HEK293 (cell line): ENCODE measurements at regions of chr9 and their contacts with region 1.

Region 1: GRCh38 chr9:130461218-130461630 is 16.5 kb downstream of the ASS1 start:
- H3K4me3 ChIP-seq: no peak overlapping the region
- H3K27ac ChIP-seq: no peak overlapping the region
- H3K4me1 ChIP-seq: no peaks in the 10 kb centered on the region
- CTCF ChIP-seq: peak; percentile 92

Region 2: DNA sequence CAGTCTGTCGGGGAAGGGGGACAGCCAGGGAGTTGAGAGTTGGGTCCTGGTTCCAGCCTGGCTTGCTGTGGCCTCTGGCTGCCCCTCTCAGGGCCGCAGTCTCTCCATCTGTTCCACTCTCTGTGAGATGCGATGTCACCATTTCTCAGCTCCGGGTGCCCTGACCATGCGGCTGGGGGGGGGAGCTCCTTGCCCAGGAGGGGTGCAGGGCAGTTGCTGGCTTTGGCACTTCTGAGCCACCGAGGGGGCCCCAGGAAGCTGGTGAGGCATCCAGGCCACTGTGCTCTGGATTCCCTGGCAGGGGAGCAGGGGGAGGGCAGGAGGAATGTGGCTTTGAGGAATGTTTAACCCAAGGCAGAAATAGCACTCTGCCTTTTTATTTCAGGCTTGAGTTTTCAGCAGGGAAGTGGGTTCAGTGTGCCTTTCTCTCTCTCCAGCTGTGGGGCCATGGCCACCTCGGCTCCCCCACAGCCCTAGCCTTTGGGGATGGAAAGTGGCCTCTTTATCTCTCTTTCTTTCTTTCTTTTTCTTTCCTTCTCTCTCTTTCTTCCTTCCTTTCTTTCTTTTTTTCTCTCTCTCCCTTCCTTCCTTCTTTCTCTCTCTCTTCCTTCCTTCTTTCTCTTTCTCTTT is 278.0 kb before region 1 on chr9:
- CTCF ChIA-PET with region 1: no interaction called
- POLR2A ChIA-PET with region 1: no interaction called
- H3K4me3 ChIP-seq: no peak overlapping the region
- H3K27ac ChIP-seq: no peak overlapping the region
- H3K4me1 ChIP-seq: peaks cover 2% of the 10 kb centered on the region; the same call in 1 of the 2 replicates
- CTCF ChIP-seq: no peak

Region 3: DNA sequence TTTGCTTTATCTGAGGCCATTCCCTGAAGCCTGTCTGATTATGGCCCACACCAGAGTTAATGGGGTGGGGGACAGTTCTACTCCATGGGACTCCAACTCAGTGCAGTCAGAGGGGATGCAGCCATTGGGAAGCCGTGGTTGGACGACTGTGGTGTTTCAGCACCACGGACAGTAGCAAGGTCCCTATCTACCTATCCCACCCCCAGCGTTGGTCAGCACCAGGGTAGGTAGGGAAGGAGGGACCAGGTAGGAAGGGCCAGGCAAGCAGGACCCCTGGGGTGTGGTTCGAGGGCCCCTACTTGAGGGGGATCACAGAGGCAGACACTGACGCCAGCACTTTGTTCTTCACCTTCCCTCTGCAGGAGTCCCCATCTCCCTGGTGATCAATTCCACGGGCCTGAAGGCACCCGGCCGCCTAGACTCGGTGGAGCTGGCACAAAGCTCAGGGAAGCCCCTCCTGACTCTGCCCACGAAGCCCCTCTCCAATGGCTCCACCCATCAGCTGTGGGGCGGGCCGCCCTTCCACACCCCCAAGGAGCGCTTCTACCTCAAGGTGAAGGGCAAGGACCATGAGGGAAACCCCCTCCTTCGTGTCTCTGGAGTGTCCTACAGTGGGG is 162.5 kb before region 1 on chr9:
- CTCF ChIA-PET with region 1: no interaction called
- POLR2A ChIA-PET with region 1: no interaction called
- H3K4me3 ChIP-seq: no peak overlapping the region
- H3K27ac ChIP-seq: no peak overlapping the region
- H3K4me1 ChIP-seq: no peaks in the 10 kb centered on the region
- CTCF ChIP-seq: no peak

Region 4: GRCh38 chr9:130446111-130446861 is 14.9 kb before region 1 on chr9:
- CTCF ChIA-PET with region 1: interaction called, 21 read pairs
- POLR2A ChIA-PET with region 1: interaction called, 4 read pairs
- H3K4me3 ChIP-seq: no peak overlapping the region
- H3K27ac ChIP-seq: peak overlapping the region; percentile 57; the same call in 1 of the 2 replicates
- H3K4me1 ChIP-seq: peaks cover 5% of the 10 kb centered on the region
- CTCF ChIP-seq: no peak

Region 5: DNA sequence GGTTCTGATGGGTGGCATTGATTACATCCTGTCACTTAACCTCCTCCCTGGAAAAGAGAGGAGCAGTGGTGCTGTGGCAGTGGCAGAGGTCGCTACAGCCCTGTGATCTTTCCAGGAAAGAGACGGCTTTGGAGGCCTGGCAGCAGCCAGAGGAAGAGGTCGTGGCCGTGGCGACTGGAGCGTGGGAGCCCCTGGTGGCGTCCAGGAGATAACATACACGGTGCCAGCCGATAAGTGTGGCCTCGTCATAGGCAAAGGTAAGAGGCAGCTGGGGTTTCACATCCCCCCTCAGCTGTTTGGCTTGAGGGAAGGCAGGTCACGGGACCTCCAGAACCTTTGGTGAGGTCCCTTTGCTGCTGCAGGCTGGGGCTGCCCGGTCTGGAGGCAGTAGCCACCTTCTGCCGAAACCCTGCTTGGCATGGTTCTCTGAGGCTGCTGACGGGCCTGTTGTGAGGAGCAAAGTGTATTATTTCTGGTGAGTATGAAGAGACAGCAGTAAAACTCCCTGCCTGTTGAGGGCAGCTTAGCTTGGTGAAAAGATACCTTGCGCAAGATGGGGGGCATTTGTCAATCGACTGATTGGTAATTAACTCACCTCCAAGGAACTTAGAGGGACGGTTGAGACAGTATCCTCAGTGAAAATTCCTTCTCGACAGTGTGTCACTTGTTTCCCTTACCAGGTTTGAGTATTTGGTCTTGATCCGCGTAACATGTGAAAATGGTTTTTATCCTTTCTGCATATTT is 165.2 kb after region 1 on chr9:
- CTCF ChIA-PET with region 1: interaction called, 6 read pairs
- POLR2A ChIA-PET with region 1: interaction called, 11 read pairs
- H3K4me3 ChIP-seq: no peak overlapping the region
- H3K27ac ChIP-seq: no peak overlapping the region
- H3K4me1 ChIP-seq: no peaks in the 10 kb centered on the region
- CTCF ChIP-seq: 0 out of 2 replicates have a peak, but pooled peaks have one; percentile 10

Region 6: DNA sequence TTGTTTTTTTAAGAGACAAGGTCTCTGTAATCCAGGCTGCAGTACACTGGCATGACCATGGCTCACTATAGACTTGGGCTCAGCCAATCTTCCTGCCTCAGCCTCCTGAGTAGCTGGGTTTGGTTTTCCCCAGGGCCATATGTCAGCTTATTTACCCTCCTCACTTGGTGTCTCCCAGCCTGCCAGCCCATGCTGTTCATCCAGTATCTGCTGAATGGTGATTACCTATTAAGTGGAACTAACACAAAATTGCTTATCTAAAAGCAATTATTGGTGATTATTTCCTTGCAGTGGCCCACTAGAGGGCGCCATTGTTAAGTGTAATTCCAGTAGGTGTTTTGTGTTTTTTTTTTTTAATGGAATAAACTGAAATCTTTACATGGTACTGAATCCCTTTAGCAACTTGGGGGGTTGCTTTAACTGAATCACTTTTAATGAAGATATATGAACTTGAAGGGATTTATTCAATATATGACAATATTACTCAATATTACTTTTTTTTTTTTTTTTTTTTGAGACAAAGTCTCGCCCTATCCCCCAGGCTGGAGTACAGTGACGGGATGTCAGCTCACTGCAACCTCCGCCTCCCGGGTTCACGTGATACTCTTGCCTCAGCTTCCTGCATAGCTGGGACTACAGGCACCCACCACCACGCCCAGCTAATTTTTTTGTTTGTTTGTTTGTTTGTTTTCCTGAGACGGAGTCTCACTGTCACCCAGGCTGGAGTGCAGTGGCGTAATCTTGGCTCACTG is 246.2 kb after region 1 on chr9:
- CTCF ChIA-PET with region 1: interaction called, 23 read pairs
- POLR2A ChIA-PET with region 1: interaction called, 4 read pairs
- H3K4me3 ChIP-seq: no peak overlapping the region
- H3K27ac ChIP-seq: no peak overlapping the region
- H3K4me1 ChIP-seq: no peaks in the 10 kb centered on the region
- CTCF ChIP-seq: peak; percentile 79